Ascending aorta (tissue), 2 donors: ENCODE measurements at regions of chr17 and their contacts with region 1.

Region 1: GRCh38 chr17:30093463-30094147 is 23.0 kb upstream of the NSRP1 start:
- DNase-seq: peak in 1 of 2 donors; percentile 71
- H3K4me3 ChIP-seq: no peak overlapping the region
- H3K27ac ChIP-seq: no peak overlapping the region
- H3K4me1 ChIP-seq: no peaks in the 10 kb centered on the region
- H3K27me3 ChIP-seq: no peaks in the 10 kb centered on the region
- CTCF ChIP-seq: peak; percentile 59 to 84 (median 73)

Region 2: DNA sequence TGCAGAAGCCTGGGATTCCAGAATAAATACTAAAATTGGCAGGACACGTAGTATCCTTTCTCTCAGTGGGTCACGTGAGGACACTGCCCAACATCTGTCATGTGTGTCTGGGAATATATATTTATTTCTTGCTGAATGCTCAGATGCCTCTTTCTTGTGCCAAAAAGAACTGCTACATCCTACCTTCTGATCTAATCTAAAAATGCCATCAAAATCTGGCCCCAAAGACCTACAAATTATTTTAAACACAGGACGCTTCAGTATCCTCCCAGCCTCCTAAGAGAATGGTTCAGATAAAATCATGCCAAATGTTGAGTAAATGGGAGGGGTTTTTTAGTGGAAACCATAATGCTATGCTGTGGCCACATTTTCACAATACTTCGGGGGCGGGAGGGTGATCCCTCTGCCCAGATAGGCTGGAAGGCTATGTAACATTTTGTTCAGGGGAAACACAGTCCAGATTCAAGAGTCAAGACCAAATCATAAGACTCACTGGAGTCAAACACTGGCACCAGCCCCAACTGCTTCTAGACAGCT is 448.0 kb before region 1 on chr17:
- intact Hi-C with region 1: loop called (anchors 10 kb)
- DNase-seq: peak; percentile 54 to 89
- H3K4me3 ChIP-seq: no peak overlapping the region
- H3K27ac ChIP-seq: peak overlapping the region; percentile 69 to 84
- H3K4me1 ChIP-seq: peaks cover 12 to 32% of the 10 kb centered on the region in 2 donors
- H3K27me3 ChIP-seq: no peaks in the 10 kb centered on the region
- CTCF ChIP-seq: no peak

Region 3: GRCh38 chr17:29807520-29808351 is 285.9 kb before region 1 on chr17:
- intact Hi-C with region 1: loop called (anchors 5 kb)
- DNase-seq: peak in 1 of 2 donors; percentile 69
- H3K4me3 ChIP-seq: no peak overlapping the region
- H3K27ac ChIP-seq: no peak overlapping the region
- H3K4me1 ChIP-seq: no peaks in the 10 kb centered on the region
- H3K27me3 ChIP-seq: no peaks in the 10 kb centered on the region
- CTCF ChIP-seq: peak; percentile 50 to 73 (median 62)

Region 4: DNA sequence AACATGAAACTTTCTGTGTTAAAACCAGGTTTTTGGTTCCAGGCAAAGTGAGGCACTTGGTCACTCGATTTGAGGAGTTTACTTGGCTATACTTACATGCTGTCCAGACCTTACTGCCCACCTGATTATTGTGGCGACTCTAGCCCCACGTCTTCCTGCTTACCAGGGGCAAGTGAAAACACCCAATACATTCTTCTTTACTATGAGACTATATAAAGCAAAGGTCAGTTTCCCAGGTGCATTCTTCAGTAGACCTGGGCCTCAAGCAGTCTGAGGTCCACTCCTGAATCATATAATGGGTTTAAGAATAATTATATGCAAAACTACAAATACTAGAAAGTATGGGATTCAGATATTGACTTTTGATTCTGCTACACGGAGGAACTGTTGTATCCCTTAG is 65.9 kb before region 1 on chr17:
- intact Hi-C with region 1: loop called (anchors 2 kb)
- DNase-seq: no peak
- H3K4me3 ChIP-seq: no peak overlapping the region
- H3K27ac ChIP-seq: no peak overlapping the region
- H3K4me1 ChIP-seq: no peaks in the 10 kb centered on the region
- H3K27me3 ChIP-seq: no peaks in the 10 kb centered on the region
- CTCF ChIP-seq: no peak

Region 5: GRCh38 chr17:30148376-30148775 is 54.8 kb after region 1 on chr17:
- intact Hi-C with region 1: no loop called
- DNase-seq: no peak
- H3K4me3 ChIP-seq: no peak overlapping the region
- H3K27ac ChIP-seq: no peak overlapping the region
- H3K4me1 ChIP-seq: no peaks in the 10 kb centered on the region
- H3K27me3 ChIP-seq: no peaks in the 10 kb centered on the region
- CTCF ChIP-seq: no peak

Region 6: DNA sequence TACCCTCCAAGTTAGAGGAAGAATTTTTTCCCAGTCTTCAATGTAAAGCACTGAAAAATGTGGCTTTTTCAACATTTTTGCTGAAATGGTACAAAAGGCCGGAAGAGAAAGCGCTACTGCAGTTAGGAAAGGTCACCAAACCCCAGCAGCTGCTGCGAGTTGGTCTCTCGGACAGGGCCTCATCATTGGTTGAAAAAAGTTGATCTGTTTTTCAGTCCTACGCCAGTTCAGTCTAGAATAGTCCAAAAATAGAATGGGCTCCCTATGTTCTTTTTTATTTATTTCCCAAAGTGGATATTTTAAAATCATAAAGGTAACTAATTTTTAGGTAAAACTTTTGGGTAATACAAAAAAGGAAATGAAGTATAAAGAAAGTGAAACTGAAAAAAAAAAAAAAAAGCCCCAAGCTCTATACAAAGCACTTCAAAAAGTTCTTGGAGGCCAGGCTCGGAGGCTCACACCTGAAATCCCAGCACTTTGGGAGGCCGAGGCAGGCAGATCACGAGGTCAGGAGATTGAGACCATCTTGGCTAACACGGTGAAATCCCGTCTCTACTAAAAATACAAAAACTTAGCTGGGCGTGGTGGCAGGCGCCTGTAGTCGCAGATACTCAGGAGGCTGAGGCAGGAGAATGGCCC is 845.6 kb after region 1 on chr17:
- intact Hi-C with region 1: no loop called
- DNase-seq: no peak
- H3K4me3 ChIP-seq: no peak overlapping the region
- H3K27ac ChIP-seq: no peak overlapping the region
- H3K4me1 ChIP-seq: no peaks in the 10 kb centered on the region
- H3K27me3 ChIP-seq: no peaks in the 10 kb centered on the region
- CTCF ChIP-seq: no peak